PC-9 (cell line): ENCODE measurements at regions of chr14 and their contacts with region 1.

Region 1: DNA sequence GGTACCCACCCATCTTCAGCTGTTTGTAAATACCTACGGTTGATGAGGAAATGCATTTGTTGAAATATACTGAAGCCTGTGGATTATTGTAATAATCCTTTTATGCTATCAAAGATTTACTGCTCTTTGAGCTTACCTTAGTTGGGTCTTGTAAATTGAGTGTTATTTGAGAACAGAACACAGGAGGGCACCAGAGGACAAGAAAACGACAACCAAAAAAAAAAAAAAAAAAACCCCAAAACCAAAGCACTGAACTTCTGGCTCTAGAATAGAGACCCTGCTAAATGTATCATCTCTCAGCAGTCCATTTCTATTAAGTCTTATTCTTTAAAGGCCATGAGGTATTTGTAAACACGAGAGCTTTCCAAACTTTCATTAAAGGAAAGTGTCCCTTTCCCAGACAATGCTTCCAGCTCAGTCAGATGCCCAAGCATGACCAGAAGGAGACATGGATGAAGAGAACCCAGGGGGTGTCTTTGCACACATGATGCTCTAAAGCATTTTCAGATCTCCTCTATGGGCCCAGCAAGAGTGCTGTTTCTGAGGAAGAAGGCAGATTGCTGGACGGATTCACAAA is 763.9 kb downstream of the NRXN3 start:
- DNase-seq: peak in 1 of 2 experiments; percentile 8
- H3K4me3 ChIP-seq: no peak overlapping the region
- H3K27ac ChIP-seq: no peak overlapping the region
- H3K4me1 ChIP-seq: no peaks in the 10 kb centered on the region
- H3K27me3 ChIP-seq: no peaks in the 10 kb centered on the region
- CTCF ChIP-seq: peak; percentile 85

Region 2: DNA sequence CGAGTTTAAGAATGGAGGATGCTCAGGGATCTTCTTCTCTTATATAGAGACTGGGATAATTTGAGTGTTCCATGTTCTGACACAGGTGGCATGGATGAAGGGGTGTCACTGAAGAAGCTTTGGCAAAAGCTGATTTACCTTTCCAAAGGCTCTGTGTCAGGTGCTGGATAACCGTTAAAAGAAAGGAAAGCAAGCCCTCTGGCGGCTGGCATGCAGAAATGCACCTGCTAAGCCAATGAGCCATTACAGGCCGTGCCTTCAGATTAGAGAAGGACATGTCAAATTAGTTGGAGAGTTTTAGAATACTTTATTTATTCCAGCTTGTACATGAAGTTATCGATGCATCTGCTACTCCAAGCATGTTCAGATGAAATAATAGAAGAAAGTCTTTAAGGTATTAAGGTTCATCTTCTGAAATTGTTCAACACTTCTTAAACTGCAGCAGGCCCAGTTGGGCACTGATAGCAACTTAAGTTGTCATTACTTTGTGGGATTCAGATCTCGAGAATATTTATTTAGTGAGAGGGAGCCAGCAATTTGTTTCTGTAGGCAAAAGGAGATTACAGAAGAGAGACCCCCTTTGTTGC is 85.7 kb before region 1 on chr14:
- CTCF ChIA-PET with region 1: no interaction called
- POLR2A ChIA-PET with region 1: no interaction called
- intact Hi-C with region 1: no loop called
- DNase-seq: peak; percentile 58 to 71
- H3K4me3 ChIP-seq: no peak overlapping the region
- H3K27ac ChIP-seq: no peak overlapping the region
- H3K4me1 ChIP-seq: no peaks in the 10 kb centered on the region
- H3K27me3 ChIP-seq: peaks cover 50% of the 10 kb centered on the region
- CTCF ChIP-seq: peak; percentile 100

Region 3: GRCh38 chr14:78902010-78902623 is 31.9 kb before region 1 on chr14:
- CTCF ChIA-PET with region 1: interaction called, 33 read pairs
- POLR2A ChIA-PET with region 1: no interaction called
- intact Hi-C with region 1: no loop called
- DNase-seq: peak; percentile 46 to 55
- H3K4me3 ChIP-seq: no peak overlapping the region
- H3K27ac ChIP-seq: no peak overlapping the region
- H3K4me1 ChIP-seq: no peaks in the 10 kb centered on the region
- H3K27me3 ChIP-seq: peaks cover 11% of the 10 kb centered on the region
- CTCF ChIP-seq: peak; percentile 90

Region 4: GRCh38 chr14:78959674-78960264 is 25.7 kb after region 1 on chr14:
- CTCF ChIA-PET with region 1: interaction called, 12 read pairs
- POLR2A ChIA-PET with region 1: no interaction called
- intact Hi-C with region 1: no loop called
- DNase-seq: peak; percentile 49 to 86
- H3K4me3 ChIP-seq: no peak overlapping the region
- H3K27ac ChIP-seq: no peak overlapping the region
- H3K4me1 ChIP-seq: no peaks in the 10 kb centered on the region
- H3K27me3 ChIP-seq: no peaks in the 10 kb centered on the region
- CTCF ChIP-seq: peak; percentile 99

Region 5: DNA sequence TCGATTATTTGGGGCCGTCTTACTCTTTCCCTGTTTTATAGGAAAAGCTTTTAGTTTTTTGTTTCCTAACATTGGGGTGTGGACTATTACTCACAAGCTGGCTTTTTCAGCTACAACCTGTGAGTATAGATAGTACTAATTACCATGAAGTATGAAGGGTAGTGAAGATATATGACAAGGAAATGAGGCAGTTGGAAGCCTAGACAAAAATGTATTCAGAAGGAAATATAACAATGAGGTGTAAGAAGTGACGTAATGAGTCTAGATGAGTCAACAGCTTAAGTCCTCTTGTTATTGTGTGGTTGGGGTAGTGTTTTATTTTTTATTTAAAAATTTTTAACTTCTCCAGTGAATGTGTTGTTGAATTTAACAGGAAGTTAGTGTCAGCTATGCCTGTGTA is 40.7 kb after region 1 on chr14:
- CTCF ChIA-PET with region 1: interaction called, 22 read pairs
- POLR2A ChIA-PET with region 1: no interaction called
- intact Hi-C with region 1: no loop called
- DNase-seq: peak in 1 of 2 experiments; percentile 83
- H3K4me3 ChIP-seq: no peak overlapping the region
- H3K27ac ChIP-seq: 0 out of 2 replicates have a peak overlapping the region, but pooled peaks have one; percentile 5
- H3K4me1 ChIP-seq: peaks cover 11% of the 10 kb centered on the region
- H3K27me3 ChIP-seq: no peaks in the 10 kb centered on the region
- CTCF ChIP-seq: no peak

Region 6: GRCh38 chr14:79992407-79993198 is 1058.6 kb after region 1 on chr14:
- CTCF ChIA-PET with region 1: interaction called, 11 read pairs
- POLR2A ChIA-PET with region 1: no interaction called
- intact Hi-C with region 1: no loop called
- DNase-seq: no peak
- H3K4me3 ChIP-seq: no peak overlapping the region
- H3K27ac ChIP-seq: no peak overlapping the region
- H3K4me1 ChIP-seq: no peaks in the 10 kb centered on the region
- H3K27me3 ChIP-seq: no peaks in the 10 kb centered on the region
- CTCF ChIP-seq: no peak

Region 7: DNA sequence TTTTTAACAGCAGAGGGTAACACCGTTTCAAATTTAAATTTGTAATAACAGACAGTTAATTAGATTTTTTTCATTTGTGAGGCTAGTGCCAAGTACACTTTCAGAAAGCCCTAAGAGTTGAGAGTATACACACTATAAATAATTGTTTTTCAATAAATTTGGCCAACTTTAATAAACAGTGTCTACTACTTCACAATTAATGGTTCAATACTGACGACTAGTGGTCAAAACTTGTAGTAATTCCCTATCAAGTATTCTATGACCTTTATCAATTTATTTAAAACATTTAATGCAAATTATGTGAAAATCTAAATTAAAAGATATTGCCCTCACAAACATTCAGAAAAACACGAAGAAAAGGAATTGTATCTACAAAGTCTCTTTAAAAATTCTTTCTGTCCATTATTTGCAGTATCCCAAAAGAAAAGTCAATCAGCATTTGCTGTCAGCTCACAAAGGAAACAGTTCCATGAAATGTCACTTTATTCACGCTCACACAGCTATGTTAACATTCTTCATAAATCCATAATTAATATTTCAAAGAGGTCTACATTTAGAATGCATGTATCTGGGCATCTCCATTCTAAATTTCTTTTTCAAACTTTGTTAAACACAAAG is 1916.3 kb after region 1 on chr14:
- CTCF ChIA-PET with region 1: interaction called, 15 read pairs
- POLR2A ChIA-PET with region 1: no interaction called
- intact Hi-C with region 1: no loop called
- DNase-seq: no peak
- H3K4me3 ChIP-seq: no peak overlapping the region
- H3K27ac ChIP-seq: no peak overlapping the region
- H3K4me1 ChIP-seq: peaks cover 7% of the 10 kb centered on the region; the same call in 1 of the 2 replicates
- H3K27me3 ChIP-seq: no peaks in the 10 kb centered on the region
- CTCF ChIP-seq: peak; percentile 94